Activated CD4-positive, alpha-beta T cell treated with anti-CD3 and anti-CD28 coated beads, Interleukin-2, amount 10 ng/mL, durations not matched to agents 24 days and 14 days (primary cell): ENCODE measurements at regions of chr12 and their contacts with region 1.

Region 1: GRCh38 chr12:92065018-92065499 is 80.6 kb downstream of the BTG1 start:
- DNase-seq: peak; percentile 71
- H3K4me3 Mint-ChIP-seq: peak overlapping the region; percentile 35
- H3K27ac Mint-ChIP-seq: peak overlapping the region; percentile 87
- H3K4me1 Mint-ChIP-seq: peaks cover 38% of the 10 kb centered on the region
- H3K27me3 Mint-ChIP-seq: no peaks in the 10 kb centered on the region

Region 2: GRCh38 chr12:91687052-91688017 is 377.7 kb before region 1 on chr12:
- intact Hi-C with region 1: loop called (anchors 10 kb)
- DNase-seq: peak; percentile 78
- H3K4me3 Mint-ChIP-seq: peak overlapping the region; percentile 57
- H3K27ac Mint-ChIP-seq: peak overlapping the region; percentile 83
- H3K4me1 Mint-ChIP-seq: peaks cover 24% of the 10 kb centered on the region
- H3K27me3 Mint-ChIP-seq: no peaks in the 10 kb centered on the region

Region 3: GRCh38 chr12:91877022-91877421 is 188.0 kb before region 1 on chr12:
- intact Hi-C with region 1: loop called (anchors 2 kb)
- DNase-seq: peak; percentile 95
- H3K4me3 Mint-ChIP-seq: peak overlapping the region; percentile 80
- H3K27ac Mint-ChIP-seq: peak overlapping the region; percentile 97
- H3K4me1 Mint-ChIP-seq: peaks cover 46% of the 10 kb centered on the region
- H3K27me3 Mint-ChIP-seq: no peaks in the 10 kb centered on the region

Region 4: GRCh38 chr12:92049403-92049802 is 15.7 kb before region 1 on chr12:
- intact Hi-C with region 1: loop called (anchors 1 kb)
- DNase-seq: no peak
- H3K4me3 Mint-ChIP-seq: no peak overlapping the region
- H3K27ac Mint-ChIP-seq: no peak overlapping the region
- H3K4me1 Mint-ChIP-seq: peaks cover 53% of the 10 kb centered on the region
- H3K27me3 Mint-ChIP-seq: no peaks in the 10 kb centered on the region

Region 5: DNA sequence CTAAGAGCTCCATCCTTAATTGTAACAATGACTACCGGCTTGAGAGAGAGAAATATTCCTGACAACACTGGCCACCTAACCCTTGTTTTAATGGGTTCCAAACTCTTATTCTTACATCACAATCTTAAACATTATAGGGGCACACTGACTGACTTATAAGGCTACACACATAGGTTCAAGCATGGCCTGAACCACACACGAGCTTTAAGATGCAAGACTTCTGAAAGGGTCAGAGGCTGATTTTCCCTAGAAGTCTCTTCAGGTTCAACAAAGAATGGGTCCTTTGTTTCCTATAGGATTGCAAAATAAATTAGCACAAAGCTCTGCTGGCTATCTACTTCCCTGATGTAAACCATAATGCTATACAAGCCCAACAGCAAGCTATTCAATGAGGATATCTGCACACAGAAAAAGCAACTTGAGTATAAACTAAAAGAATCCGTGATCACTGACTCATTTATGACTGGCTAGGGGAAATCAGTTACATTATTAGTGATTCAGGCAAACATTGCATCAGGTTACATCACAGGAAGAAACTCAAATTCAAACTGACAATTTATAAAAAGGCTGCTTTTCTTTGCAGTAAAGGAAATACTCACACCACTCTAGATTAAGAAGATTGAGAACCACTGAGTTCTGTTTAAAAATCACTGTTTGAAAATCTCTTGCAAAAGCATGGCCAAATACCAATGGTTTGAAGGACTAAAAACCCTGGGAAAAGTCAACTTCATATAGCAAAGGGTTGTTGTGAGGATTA is 72.1 kb after region 1 on chr12:
- intact Hi-C with region 1: loop called (anchors 1 kb)
- DNase-seq: peak; percentile 60
- H3K4me3 Mint-ChIP-seq: peak overlapping the region; percentile 99
- H3K27ac Mint-ChIP-seq: peak overlapping the region; percentile 82
- H3K4me1 Mint-ChIP-seq: peaks cover 66% of the 10 kb centered on the region
- H3K27me3 Mint-ChIP-seq: no peaks in the 10 kb centered on the region

Region 6: DNA sequence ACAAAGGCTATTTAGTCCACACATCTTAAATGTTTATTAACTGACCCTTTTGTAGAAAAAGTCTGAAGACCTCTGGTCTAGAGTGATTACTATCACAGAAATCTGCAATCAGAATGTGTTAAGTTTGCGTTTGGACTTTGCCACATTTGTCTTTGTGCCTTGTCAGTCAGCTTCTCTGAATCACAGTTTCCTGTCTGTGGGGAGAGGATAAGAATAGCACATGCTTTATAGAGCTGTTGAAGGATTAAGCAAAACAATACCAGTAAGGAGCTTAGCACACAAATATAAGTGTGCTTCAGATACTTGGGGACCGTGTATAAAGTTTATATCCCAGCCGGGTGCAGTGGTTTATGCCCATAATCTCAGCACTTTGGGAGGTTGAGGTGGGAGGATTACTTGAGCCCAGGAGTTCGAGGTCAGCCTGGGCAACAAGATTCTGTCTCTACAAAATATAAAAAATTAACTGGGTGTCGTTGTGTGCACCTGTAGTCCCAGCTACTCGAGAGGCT is 143.6 kb after region 1 on chr12:
- intact Hi-C with region 1: loop called (anchors 5 kb)
- DNase-seq: peak; percentile 82
- H3K4me3 Mint-ChIP-seq: peak overlapping the region; percentile 66
- H3K27ac Mint-ChIP-seq: peak overlapping the region; percentile 94
- H3K4me1 Mint-ChIP-seq: peaks cover 36% of the 10 kb centered on the region
- H3K27me3 Mint-ChIP-seq: no peaks in the 10 kb centered on the region

Region 7: GRCh38 chr12:92593734-92594402 is 528.8 kb after region 1 on chr12:
- intact Hi-C with region 1: loop called (anchors 5 kb)
- DNase-seq: peak; percentile 92
- H3K4me3 Mint-ChIP-seq: peak overlapping the region; percentile 71
- H3K27ac Mint-ChIP-seq: peak overlapping the region; percentile 99
- H3K4me1 Mint-ChIP-seq: peaks cover 57% of the 10 kb centered on the region
- H3K27me3 Mint-ChIP-seq: no peaks in the 10 kb centered on the region